Activated CD4-positive, alpha-beta memory T cell treated with anti-CD3 and anti-CD28 coated beads, Interleukin-2, amount 10 ng/mL, durations not matched to agents 7 days and 5 days (primary cell): ENCODE measurements at regions of chr6 and their contacts with region 1.

Region 1: DNA sequence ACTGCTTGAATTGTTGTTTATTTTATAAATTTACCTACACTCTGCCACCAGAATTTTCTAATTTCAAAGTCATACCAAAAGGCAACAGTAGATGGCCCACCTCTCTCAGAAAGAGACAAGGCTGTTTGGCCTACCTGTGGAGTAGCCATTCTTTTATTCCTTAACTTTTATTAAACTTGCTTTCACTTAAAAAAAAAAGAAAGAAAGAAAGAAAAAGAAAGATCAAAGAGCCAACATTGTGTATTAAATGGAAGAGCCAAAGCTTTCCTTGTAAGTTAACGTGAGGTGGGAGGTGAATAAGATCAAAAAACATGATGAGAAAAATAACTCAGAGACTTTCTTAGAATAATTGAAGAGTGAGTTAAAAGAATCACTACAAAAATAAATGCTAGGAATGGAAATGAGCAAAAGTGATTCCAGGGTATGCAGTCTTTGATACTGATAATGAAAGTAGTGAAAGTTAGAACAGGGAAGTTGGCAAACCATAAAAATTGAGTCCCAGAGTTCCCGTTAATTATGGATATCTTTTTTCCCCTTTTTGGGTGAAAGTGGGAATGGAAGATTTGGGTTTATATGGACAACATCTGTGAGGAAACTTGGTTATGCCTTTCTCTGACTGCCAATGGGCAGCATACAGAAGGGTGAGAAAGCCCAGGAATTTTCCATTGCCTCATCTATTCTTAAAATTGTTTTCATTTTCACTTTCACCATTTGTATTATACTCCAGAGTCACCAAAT is 35.9 kb upstream of the MYB start:
- DNase-seq: no peak
- H3K4me3 Mint-ChIP-seq: peak overlapping the region; percentile 44
- H3K27ac Mint-ChIP-seq: peak overlapping the region; percentile 36
- H3K4me1 Mint-ChIP-seq: peaks cover 64% of the 10 kb centered on the region
- H3K27me3 Mint-ChIP-seq: no peaks in the 10 kb centered on the region

Region 2: DNA sequence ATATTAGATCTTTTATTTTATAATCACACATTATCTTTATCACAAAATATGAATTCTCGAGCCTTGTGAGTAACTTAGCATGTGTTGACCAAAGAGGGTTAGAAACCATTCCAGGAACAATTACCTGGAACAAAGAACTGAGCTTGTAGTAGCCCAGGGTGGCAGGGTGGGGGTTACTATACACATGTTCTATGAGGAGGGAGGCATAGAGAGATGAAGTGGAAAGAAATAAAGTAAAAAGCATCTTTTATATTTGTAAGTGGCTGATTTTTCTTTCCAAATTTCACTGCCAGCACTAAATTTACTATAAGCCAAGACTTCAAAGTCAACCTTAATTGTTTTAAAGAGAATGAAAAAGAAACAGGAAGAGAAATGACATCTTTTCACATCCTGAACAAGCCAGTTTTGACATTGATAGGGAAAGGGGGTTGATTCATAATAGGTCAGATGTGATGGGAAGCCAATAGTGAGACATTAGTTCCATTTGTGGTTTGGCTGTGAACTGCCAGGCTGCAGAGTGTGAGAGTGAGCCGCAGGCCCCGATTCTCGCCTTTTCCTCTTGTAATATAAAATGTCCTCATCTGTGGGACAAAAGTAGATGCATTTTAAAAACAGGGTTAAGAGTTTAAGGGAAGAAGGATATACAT is 16.8 kb before region 1 on chr6:
- CTCF ChIA-PET with region 1: interaction called, 13 read pairs
- POLR2A ChIA-PET with region 1: interaction called, 16 read pairs
- DNase-seq: peak; percentile 74
- H3K4me3 Mint-ChIP-seq: peak overlapping the region; percentile 47
- H3K27ac Mint-ChIP-seq: peak overlapping the region; percentile 96
- H3K4me1 Mint-ChIP-seq: peaks cover 41% of the 10 kb centered on the region
- H3K27me3 Mint-ChIP-seq: no peaks in the 10 kb centered on the region

Region 3: GRCh38 chr6:135162678-135163439 is 17.6 kb after region 1 on chr6:
- CTCF ChIA-PET with region 1: interaction called, 16 read pairs
- POLR2A ChIA-PET with region 1: interaction called, 5 read pairs
- DNase-seq: peak; percentile 56
- H3K4me3 Mint-ChIP-seq: peak overlapping the region; percentile 43
- H3K27ac Mint-ChIP-seq: peak overlapping the region; percentile 90
- H3K4me1 Mint-ChIP-seq: peaks cover 61% of the 10 kb centered on the region
- H3K27me3 Mint-ChIP-seq: no peaks in the 10 kb centered on the region

Region 4: GRCh38 chr6:135191508-135192255 is 46.5 kb after region 1 on chr6:
- CTCF ChIA-PET with region 1: interaction called, 10 read pairs
- POLR2A ChIA-PET with region 1: interaction called, 3 read pairs
- DNase-seq: no peak
- H3K4me3 Mint-ChIP-seq: no peak overlapping the region
- H3K27ac Mint-ChIP-seq: no peak overlapping the region
- H3K4me1 Mint-ChIP-seq: peaks cover 46% of the 10 kb centered on the region
- H3K27me3 Mint-ChIP-seq: no peaks in the 10 kb centered on the region

Region 5: GRCh38 chr6:135423649-135424128 is 278.5 kb after region 1 on chr6:
- CTCF ChIA-PET with region 1: interaction called, 19 read pairs
- POLR2A ChIA-PET with region 1: no interaction called
- DNase-seq: no peak
- H3K4me3 Mint-ChIP-seq: no peak overlapping the region
- H3K27ac Mint-ChIP-seq: peak overlapping the region; percentile 41
- H3K4me1 Mint-ChIP-seq: peaks cover 21% of the 10 kb centered on the region
- H3K27me3 Mint-ChIP-seq: no peaks in the 10 kb centered on the region